Activated CD4-positive, alpha-beta T cell treated with anti-CD3 and anti-CD28 coated beads for 36 hours (primary cell): ENCODE measurements at regions of chr7 and their contacts with region 1.

Region 1: GRCh38 chr7:114051871-114052331 is 133.1 kb upstream of the PPP1R3A start:
- DNase-seq: no peak
- ATAC-seq: no peak
- H3K4me3 Mint-ChIP-seq: no peak overlapping the region
- H3K27ac Mint-ChIP-seq: no peak overlapping the region
- H3K4me1 Mint-ChIP-seq: peaks cover 18% of the 10 kb centered on the region
- H3K27me3 Mint-ChIP-seq: peaks cover 2% of the 10 kb centered on the region

Region 2: DNA sequence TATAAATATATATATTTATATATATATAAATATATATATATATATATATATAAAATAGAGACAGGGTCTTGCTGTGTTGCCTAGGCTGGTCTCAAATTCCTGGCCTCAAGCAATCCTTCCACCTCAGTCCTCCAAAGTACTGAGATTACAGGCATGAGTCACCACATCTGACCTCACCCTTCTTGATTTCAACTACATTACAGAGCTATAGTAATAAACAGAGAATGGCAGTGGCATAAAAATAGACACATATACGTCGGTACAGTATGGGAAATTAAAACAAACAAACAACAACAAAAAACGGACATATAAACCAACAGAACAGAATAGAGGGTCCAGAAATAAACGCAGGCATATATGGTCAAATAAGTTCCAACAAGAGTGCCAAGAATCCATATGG is 55.5 kb before region 1 on chr7:
- CTCF ChIA-PET with region 1: no interaction called
- POLR2A ChIA-PET with region 1: no interaction called
- intact Hi-C with region 1: loop called in 1 of 2 experiments (anchors 5 kb)
- DNase-seq: no peak
- ATAC-seq: no peak
- H3K4me3 Mint-ChIP-seq: no peak overlapping the region
- H3K27ac Mint-ChIP-seq: no peak overlapping the region
- H3K4me1 Mint-ChIP-seq: no peaks in the 10 kb centered on the region
- H3K27me3 Mint-ChIP-seq: no peaks in the 10 kb centered on the region

Region 3: DNA sequence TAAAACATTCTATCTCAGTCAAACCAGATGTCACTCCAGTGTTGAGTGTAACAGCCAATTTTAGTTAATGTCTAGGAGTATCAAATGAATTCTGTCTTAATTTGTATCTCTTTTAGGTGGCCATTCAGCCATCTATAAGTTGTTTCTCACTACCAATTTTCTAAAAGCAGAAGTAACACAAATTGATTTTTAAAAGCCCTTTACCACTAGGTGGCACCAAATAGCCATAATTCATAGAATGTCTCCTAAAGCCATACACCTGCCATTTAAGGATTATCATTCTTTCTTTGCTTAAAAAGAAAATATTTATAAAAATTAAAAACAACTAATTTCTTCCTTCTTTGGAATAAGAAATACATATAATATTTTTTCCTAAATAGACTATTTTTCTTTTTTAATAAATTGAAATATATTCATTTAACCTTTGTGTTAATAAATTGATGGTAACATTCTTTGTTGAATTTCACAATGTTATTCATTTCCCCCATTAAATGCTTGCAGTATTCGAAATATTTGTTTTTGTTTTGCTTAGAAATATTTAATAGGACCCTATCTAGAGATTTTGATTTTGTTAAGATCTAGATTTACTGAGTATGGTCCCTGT is 25.3 kb before region 1 on chr7:
- CTCF ChIA-PET with region 1: no interaction called
- POLR2A ChIA-PET with region 1: no interaction called
- intact Hi-C with region 1: no loop called
- DNase-seq: no peak
- ATAC-seq: no peak
- H3K4me3 Mint-ChIP-seq: no peak overlapping the region
- H3K27ac Mint-ChIP-seq: no peak overlapping the region
- H3K4me1 Mint-ChIP-seq: no peaks in the 10 kb centered on the region
- H3K27me3 Mint-ChIP-seq: no peaks in the 10 kb centered on the region

Region 4: GRCh38 chr7:114160925-114161324 is 109.0 kb after region 1 on chr7:
- CTCF ChIA-PET with region 1: no interaction called
- POLR2A ChIA-PET with region 1: no interaction called
- intact Hi-C with region 1: no loop called
- DNase-seq: no peak
- ATAC-seq: no peak
- H3K4me3 Mint-ChIP-seq: no peak overlapping the region
- H3K27ac Mint-ChIP-seq: no peak overlapping the region
- H3K4me1 Mint-ChIP-seq: no peaks in the 10 kb centered on the region
- H3K27me3 Mint-ChIP-seq: no peaks in the 10 kb centered on the region